ENCODE measurements at regions of chr18 and their contacts with region 1.

Region 1: GRCh38 chr18:65990944-65991708 is 240.3 kb downstream of the CDH7 start:
- DNase-seq: peak; percentile 84
- H3K4me3 ChIP-seq: no peak overlapping the region
- H3K27ac ChIP-seq: peak overlapping the region; percentile 96
- H3K4me1 ChIP-seq: peaks cover 48% of the 10 kb centered on the region
- H3K27me3 ChIP-seq: no peaks in the 10 kb centered on the region
- CTCF ChIP-seq: no peak

Region 2: GRCh38 chr18:65938592-65939372 is 52.3 kb before region 1 on chr18:
- CTCF ChIA-PET with region 1: no interaction called
- POLR2A ChIA-PET with region 1: no interaction called
- intact Hi-C with region 1: loop called (anchors 5 kb)
- DNase-seq: peak; percentile 91
- H3K4me3 ChIP-seq: no peak overlapping the region
- H3K27ac ChIP-seq: peak overlapping the region; percentile 2
- H3K4me1 ChIP-seq: peaks cover 18% of the 10 kb centered on the region
- H3K27me3 ChIP-seq: no peaks in the 10 kb centered on the region
- CTCF ChIP-seq: peak; percentile 79

Region 3: DNA sequence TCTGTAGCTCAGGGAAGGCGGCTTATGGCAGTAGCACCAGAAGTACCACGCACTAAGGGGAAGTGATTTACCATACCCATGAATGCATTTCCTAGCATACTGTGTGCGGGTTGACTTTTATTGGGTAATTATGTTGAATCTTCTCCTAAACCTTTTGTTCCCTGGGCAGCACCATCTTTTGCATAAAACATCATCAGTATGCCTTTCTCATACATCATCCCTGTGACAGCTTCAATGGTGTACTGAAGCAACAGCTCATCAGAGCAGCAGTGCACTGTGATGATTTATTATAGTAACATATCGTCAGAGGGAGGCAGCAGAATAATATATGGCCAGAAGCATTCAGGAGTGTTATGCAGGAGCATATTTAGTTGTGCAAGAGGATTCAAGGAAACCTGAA is 35.4 kb before region 1 on chr18:
- CTCF ChIA-PET with region 1: no interaction called
- POLR2A ChIA-PET with region 1: no interaction called
- intact Hi-C with region 1: loop called (anchors 1 kb)
- DNase-seq: peak; percentile 98
- H3K4me3 ChIP-seq: no peak overlapping the region
- H3K27ac ChIP-seq: peak overlapping the region; percentile 59
- H3K4me1 ChIP-seq: peaks cover 20% of the 10 kb centered on the region
- H3K27me3 ChIP-seq: no peaks in the 10 kb centered on the region
- CTCF ChIP-seq: no peak

Region 4: DNA sequence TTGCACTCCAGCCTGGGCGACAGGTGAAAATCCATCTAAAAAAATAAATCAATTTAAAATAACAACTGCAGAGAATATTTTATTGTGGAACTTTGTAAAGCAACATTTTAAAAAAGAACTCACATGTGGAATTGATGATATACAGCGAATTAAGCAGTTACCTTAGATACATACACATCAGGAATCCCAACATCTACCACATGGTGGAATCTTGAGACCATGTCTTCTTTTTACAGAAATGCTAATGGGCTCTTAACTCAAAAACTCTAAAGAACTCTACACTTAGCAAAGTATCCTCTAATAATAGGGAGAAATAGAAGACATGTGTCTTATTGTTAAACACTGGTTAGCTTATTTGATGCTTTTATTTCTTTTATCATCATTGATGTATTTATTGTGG is 133.3 kb after region 1 on chr18:
- CTCF ChIA-PET with region 1: no interaction called
- POLR2A ChIA-PET with region 1: no interaction called
- intact Hi-C with region 1: loop called (anchors 5 kb)
- DNase-seq: peak; percentile 54
- H3K4me3 ChIP-seq: no peak overlapping the region
- H3K27ac ChIP-seq: no peak overlapping the region
- H3K4me1 ChIP-seq: no peaks in the 10 kb centered on the region
- H3K27me3 ChIP-seq: no peaks in the 10 kb centered on the region
- CTCF ChIP-seq: peak; percentile 52; the same call in 1 of the 2 replicates

Measured in A673 (cell line).